ENCODE measurements at regions of chr1 and their contacts with region 1.

Region 1: DNA sequence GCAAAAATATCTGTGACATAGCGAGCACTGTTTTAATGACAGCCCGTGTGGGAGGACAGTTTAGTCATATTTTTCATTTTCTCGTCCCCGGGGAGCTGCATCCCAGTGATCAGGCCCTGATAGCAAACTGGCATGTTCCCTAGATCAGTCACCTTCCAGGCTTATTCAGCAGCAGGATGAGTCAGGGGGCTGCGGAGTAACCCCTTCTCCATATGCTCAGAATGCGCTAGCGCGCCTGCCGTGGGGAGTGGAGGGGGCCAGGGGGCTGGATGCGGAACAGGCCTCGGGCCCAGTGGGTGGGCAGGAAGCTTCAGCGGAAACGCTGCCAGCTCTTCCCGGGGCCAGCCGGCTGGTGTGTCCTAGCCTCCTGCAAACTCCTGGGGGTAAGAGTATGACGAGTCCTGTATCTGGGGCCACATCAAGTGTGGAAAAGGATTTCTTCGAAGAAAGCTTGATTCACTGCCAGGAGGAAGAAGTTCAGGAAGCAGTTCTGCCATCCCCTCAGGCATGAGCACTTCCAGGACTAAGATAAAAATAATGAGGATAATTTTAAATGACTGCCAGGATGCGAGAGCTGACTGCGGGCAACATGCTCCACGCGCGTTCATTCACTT is 93.9 kb downstream of the KCND3 start:
- DNase-seq: peak; percentile 53

Region 2: GRCh38 chr1:111538343-111539025 is 357.1 kb before region 1 on chr1:
- in situ Hi-C with region 1: no loop called
- DNase-seq: no peak

Region 3: DNA sequence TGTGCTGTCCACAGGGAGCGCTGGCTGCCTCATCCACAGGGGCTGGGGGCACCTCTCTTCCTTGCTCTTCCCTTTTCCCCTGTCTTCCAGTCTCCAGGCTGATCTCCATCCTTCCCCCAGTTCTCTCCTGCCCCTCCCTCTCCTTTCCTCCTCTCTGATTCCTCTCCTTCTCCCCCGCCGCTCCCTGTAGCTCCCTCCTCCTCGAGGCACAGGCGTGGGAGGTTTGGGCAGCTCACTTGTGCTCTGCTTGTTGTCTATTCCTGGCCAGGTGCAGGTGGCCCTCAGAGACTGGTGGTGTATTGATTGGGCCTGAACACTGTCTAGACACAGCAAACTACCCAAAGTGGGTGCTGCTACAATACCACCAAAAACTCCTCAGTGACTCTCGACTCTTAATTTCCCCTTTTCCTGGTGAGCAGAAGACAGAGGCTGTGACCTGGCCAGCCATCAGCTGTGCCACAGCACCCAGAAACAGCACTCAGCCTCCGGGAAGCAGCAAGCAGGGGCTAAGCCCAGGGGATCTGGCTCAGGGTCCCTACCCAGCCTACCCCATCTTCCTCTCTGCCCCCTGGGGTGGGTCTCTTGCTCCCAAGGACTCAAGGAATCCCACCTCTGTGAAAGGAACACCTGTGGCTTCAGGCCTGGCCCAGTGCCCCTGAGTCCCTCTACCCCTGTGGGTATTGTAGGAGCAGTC is 46.6 kb before region 1 on chr1:
- in situ Hi-C with region 1: loop called (anchors 5 kb)
- DNase-seq: no peak